Sciatic nerve (tissue), 2 donors: ENCODE measurements at regions of chr11 and their contacts with region 1.

Region 1: GRCh38 chr11:2532704-2533586 is 88.1 kb downstream of the KCNQ1 start:
- DNase-seq: peak; percentile 97
- ATAC-seq: peak; percentile 91

Region 2: DNA sequence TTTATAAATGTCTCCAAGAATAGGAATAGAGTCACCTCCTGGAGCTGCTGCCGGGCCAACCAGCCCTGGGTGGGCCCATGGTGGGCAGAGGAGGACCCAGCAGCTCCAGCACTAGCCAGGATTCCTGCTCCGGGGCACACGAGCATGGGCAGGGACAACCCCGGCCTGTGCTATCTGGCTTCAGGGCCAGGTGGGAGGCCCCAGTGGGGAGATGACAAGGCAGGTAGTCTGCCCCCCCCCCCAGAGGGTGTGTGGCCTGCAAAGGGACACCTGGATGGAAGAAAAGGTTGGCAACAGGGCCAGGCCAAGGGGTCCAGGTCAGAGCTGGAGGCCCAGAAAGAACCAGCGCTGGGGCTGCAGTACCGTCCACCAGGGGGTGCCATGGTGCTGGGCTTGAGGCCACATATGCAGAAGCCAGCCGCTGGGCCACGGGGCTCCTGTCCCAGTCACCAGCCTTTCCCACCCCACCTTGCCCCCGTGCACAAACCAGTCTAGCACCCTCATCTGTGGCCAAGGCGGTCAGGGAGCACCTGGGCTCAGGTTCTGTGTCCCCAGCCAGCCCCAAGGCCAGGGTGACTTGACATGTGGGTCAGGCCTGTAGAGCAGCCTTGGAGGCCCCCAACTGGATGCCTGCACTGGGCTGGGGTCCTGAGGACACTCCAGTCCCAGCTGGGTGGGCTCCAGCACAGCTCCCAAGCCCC is 227.7 kb before region 1 on chr11:
- intact Hi-C with region 1: loop called (anchors 10 kb)
- DNase-seq: peak; percentile 96
- ATAC-seq: peak; percentile 70

Region 3: DNA sequence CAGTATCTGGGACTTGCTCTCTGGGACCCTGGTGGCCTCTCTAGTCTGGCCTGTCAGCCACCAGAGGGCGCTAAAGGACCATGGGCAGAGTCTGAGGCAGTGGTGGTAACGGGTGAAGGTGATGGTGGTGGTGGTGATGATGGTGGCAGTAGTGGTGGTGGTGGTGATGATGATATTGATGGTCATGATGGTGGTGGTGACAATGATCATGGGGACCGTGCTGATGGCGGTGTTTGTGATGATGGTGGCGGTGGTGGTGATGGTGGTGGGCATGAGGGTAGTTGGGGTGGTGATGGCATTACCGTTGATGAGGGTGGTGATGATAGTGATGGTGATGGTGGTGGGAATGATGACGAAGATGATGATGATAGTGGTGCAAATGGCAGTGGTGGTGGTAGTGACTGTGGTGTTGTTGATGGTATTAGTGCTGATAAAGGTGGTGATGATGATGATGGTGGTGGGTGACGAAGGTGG is 104.6 kb before region 1 on chr11:
- intact Hi-C with region 1: loop called (anchors 1 kb)
- DNase-seq: peak; percentile 87
- ATAC-seq: peak; percentile 75

Region 4: DNA sequence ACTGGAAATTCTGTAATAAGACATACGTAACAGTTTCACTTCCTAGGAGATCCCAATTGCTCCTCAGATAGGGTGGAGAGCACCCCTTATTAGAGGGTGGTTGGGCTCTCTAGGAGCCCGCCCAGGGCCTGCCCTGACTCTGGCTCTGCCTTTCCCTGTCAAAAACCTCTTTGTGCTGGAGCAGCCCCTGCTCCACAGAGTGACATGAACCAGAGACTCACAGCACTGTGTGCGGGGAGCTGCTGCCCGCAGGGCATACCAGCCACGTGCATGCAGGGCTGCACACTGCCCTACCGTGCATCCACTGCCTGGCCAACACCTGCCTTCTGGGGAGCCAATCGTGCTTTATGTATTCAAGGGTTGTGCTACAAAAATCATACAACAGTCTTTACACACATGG is 142.6 kb after region 1 on chr11:
- intact Hi-C with region 1: loop called (anchors 10 kb)
- DNase-seq: peak; percentile 42
- ATAC-seq: peak; percentile 62

Region 5: GRCh38 chr11:2892215-2893020 is 359.5 kb after region 1 on chr11:
- intact Hi-C with region 1: loop called (anchors 2 kb)
- DNase-seq: peak; percentile 86
- ATAC-seq: peak; percentile 67